WTC11 (cell line): ENCODE measurements at regions of chr13 and their contacts with region 1.

Region 1: GRCh38 chr13:79393564-79394249 is 12.3 kb downstream of the RBM26 start:
- DNase-seq: no peak
- ATAC-seq: peak; percentile 40
- H3K4me3 Mint-ChIP-seq: no peak overlapping the region
- H3K27ac Mint-ChIP-seq: peak overlapping the region; percentile 40
- H3K4me1 Mint-ChIP-seq: peaks cover 33% of the 10 kb centered on the region
- H3K27me3 Mint-ChIP-seq: no peaks in the 10 kb centered on the region
- CTCF ChIP-seq: no peak

Region 2: DNA sequence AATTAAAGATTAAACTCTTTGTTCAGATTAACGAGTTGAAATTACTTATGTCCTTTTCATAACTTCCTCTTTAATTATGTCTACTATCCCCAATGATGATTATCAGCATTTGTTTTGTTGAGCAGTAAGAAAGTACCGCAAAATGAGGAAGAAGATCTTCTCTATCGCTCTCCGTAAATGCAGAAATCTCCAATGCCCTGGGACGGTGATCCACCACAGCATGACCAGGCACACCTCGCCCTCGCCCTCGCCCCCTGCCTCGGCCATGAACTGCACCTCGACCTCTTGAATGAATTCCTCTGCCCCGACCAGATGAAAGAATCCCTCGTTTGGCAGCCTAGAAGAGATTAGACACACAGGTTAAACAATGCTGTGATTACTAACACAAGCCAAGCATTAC is 56.7 kb before region 1 on chr13:
- CTCF ChIA-PET with region 1: no interaction called
- POLR2A ChIA-PET with region 1: no interaction called
- DNase-seq: no peak
- ATAC-seq: no peak
- H3K4me3 Mint-ChIP-seq: no peak overlapping the region
- H3K27ac Mint-ChIP-seq: peak overlapping the region; percentile 79
- H3K4me1 Mint-ChIP-seq: no peaks in the 10 kb centered on the region
- H3K27me3 Mint-ChIP-seq: no peaks in the 10 kb centered on the region
- CTCF ChIP-seq: no peak

Region 3: GRCh38 chr13:79380997-79381396 is 12.7 kb before region 1 on chr13:
- CTCF ChIA-PET with region 1: interaction called, 12 read pairs
- POLR2A ChIA-PET with region 1: no interaction called
- DNase-seq: no peak
- ATAC-seq: no peak
- H3K4me3 Mint-ChIP-seq: no peak overlapping the region
- H3K27ac Mint-ChIP-seq: peak overlapping the region; percentile 38; the same call in 1 of the 2 replicates
- H3K4me1 Mint-ChIP-seq: peaks cover 45% of the 10 kb centered on the region
- H3K27me3 Mint-ChIP-seq: no peaks in the 10 kb centered on the region
- CTCF ChIP-seq: no peak

Region 4: GRCh38 chr13:79405829-79406596 is 12.3 kb after region 1 on chr13 and contains the start of gene RBM26:
- CTCF ChIA-PET with region 1: interaction called, 11 read pairs
- POLR2A ChIA-PET with region 1: interaction called, 5 read pairs
- DNase-seq: peak; percentile 92
- ATAC-seq: peak; percentile 87
- H3K4me3 Mint-ChIP-seq: peak within 1 kb of the TSS; percentile 88
- H3K27ac Mint-ChIP-seq: peak within 1 kb of the TSS; percentile 97
- H3K4me1 Mint-ChIP-seq: peaks cover 36% of the 10 kb centered on the region
- H3K27me3 Mint-ChIP-seq: no peaks in the 10 kb centered on the region
- CTCF ChIP-seq: no peak
- total RNA-seq, gene RBM26: 57.7 to 64.1 TPM (median 59.0 TPM) in 3 replicates